ENCODE measurements at regions of chr17 and their contacts with region 1.

Region 1: GRCh38 chr17:28937044-28937729 is 14.1 kb downstream of the PHF12 start:
- DNase-seq: no peak
- H3K4me3 ChIP-seq: peak overlapping the region in 1 of 7 experiments; percentile 25
- H3K27ac ChIP-seq: peak overlapping the region in 1 of 2 experiments; percentile 22
- H3K4me1 ChIP-seq: peaks cover 26 to 52% (median 32%) of the 10 kb centered on the region in 4 experiments
- H3K27me3 ChIP-seq: no peaks in the 10 kb centered on the region

Region 2: GRCh38 chr17:28925912-28926365 is 11.2 kb before region 1 on chr17:
- CTCF ChIA-PET with region 1: interaction called, 128 read pairs
- POLR2A ChIA-PET with region 1: no interaction called
- DNase-seq: peak; percentile 95 to 98 (median 96)
- H3K4me3 ChIP-seq: peak overlapping the region in 6 of 7 experiments; percentile 25 to 75 (median 45)
- H3K27ac ChIP-seq: peak overlapping the region; percentile 95 to 96
- H3K4me1 ChIP-seq: peaks cover 26 to 47% (median 34%) of the 10 kb centered on the region in 4 experiments
- H3K27me3 ChIP-seq: no peaks in the 10 kb centered on the region

Measured in common myeloid progenitor, CD34-positive (primary cell).